ENCODE measurements at regions of chr12 and their contacts with region 1.

Region 1: GRCh38 chr12:114864837-114865685 is 181.1 kb upstream of the TBX3 start:
- DNase-seq: no peak
- H3K4me3 ChIP-seq: no peak overlapping the region
- H3K27me3 ChIP-seq: no peaks in the 10 kb centered on the region
- CTCF ChIP-seq: no peak

Region 2: GRCh38 chr12:113609692-113610469 is 1255.2 kb before region 1 on chr12:
- CTCF ChIA-PET with region 1: no interaction called
- POLR2A ChIA-PET with region 1: no interaction called
- DNase-seq: no peak
- H3K4me3 ChIP-seq: no peak overlapping the region
- H3K27me3 ChIP-seq: peaks cover 17% of the 10 kb centered on the region
- CTCF ChIP-seq: no peak

Region 3: DNA sequence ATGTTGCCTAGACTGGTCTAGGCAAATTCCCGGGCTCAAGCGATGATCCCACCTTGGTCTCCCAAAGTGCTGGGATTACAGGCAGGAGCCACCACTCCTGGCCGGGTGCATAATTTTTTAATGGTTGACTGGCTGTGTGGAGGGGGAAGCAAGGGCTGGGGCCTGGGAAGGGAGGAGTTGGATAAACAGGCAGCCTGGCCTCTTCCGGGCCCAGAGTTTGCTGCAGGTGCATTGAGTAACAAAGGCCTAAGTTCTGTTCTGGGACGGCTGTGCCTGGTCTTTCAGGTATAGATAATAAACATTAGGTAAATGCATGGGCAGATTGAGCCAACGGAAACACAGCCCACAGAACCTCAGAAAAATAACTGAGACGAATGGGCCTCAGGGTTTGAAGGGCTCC is 10.3 kb after region 1 on chr12:
- CTCF ChIA-PET with region 1: no interaction called
- POLR2A ChIA-PET with region 1: interaction called, 17 read pairs
- DNase-seq: no peak
- H3K4me3 ChIP-seq: no peak overlapping the region
- H3K27me3 ChIP-seq: peaks cover 2% of the 10 kb centered on the region; the same call in 1 of the 2 replicates
- CTCF ChIP-seq: no peak

Region 4: DNA sequence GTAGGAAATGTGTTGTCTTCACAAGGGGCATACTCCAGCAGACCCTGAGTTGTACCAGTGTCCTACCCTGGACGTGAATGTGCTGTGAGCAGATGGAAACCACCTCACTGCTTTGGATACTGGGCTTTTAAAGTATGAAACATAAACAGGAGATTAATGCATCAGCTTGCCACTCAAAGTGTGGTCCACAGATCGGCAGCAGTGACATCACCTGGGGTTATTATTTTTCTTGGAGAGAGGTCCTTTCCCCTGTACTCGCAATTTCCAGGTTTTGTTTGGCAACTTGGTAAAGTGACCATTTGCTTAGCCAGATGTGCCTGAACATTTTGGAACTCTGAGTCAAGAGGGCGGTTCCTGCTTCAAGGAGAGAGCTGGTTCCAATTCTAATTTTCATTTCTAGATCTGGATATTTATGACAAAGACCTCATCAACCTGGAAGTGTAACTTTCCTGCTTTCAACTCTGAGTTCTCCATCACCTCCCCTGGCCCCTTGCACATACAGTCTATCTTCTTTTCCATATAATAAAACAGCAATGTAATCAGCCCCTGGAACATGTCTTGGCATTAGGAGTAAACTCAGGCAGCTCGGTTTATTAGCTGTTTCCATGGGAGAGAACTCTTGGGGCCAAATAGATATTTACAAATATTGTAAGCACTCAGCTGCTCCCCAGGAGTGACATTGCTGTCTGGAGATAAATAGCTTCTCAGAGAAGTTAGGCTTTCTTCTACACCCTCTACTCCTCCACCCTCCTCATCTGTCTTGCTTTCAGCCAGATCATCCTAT is 55.9 kb after region 1 on chr12:
- CTCF ChIA-PET with region 1: no interaction called
- POLR2A ChIA-PET with region 1: interaction called, 10 read pairs
- DNase-seq: peak; percentile 72
- H3K4me3 ChIP-seq: no peak overlapping the region
- H3K27me3 ChIP-seq: no peaks in the 10 kb centered on the region
- CTCF ChIP-seq: no peak

Region 5: DNA sequence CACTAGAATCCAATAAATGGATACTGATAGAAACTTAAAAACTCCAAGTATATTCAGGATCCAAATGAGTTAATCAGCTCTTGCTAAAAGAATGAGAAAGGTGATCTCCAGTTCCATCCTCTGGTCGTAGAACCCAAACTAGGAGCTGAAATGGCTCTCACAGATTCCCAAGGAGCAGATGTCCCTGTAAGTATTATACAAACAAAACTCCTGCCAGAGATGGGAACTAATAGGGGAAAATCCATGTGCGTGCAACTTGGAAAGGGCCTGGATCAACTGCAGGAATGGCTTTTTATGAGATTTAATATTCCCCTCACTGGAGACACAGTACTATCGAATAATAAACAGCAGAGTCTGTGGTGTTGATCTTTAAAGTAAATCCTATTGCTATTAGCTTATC is 128.1 kb after region 1 on chr12:
- CTCF ChIA-PET with region 1: no interaction called
- POLR2A ChIA-PET with region 1: no interaction called
- DNase-seq: peak; percentile 35
- H3K4me3 ChIP-seq: no peak overlapping the region
- H3K27me3 ChIP-seq: no peaks in the 10 kb centered on the region
- CTCF ChIP-seq: no peak

Region 6: GRCh38 chr12:115351221-115352077 is 486.4 kb after region 1 on chr12:
- CTCF ChIA-PET with region 1: no interaction called
- POLR2A ChIA-PET with region 1: no interaction called
- DNase-seq: no peak
- H3K4me3 ChIP-seq: no peak overlapping the region
- H3K27me3 ChIP-seq: no peaks in the 10 kb centered on the region
- CTCF ChIP-seq: no peak

Measured in BJ (cell line).